Common myeloid progenitor, CD34-positive (primary cell): ENCODE measurements at regions of chr20 and their contacts with region 1.

Region 1: GRCh38 chr20:60210779-60211617 is 252.8 kb downstream of the CDH26 start:
- DNase-seq: peak; percentile 75 to 80 (median 77)
- H3K4me3 ChIP-seq: peak overlapping the region in 1 of 7 experiments; percentile 46
- H3K27ac ChIP-seq: no peak overlapping the region
- H3K4me1 ChIP-seq: peaks cover 9 to 50% (median 15%) of the 10 kb centered on the region in 4 experiments
- H3K27me3 ChIP-seq: no peaks in the 10 kb centered on the region

Region 2: DNA sequence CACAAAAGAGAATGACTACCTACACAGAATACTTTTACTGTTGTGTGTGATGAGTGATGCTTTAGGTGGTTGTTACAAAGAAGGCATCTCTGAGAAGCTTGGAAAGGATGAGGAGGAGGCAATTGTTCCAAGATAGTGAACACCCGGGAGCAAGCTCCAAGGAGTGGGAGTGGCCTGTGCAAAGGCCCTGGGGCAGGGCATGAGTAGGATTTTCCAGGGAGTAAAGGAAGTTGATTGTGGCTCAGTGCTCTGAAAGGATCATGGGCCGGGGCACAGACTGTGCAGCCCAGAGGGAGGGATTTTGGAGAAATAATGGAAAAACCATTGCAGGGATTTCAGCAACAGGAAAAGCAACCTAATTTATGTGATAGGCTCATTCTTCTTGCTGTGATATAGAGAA is 11.5 kb after region 1 on chr20:
- CTCF ChIA-PET with region 1: interaction called, 16 read pairs
- POLR2A ChIA-PET with region 1: no interaction called
- DNase-seq: no peak
- H3K4me3 ChIP-seq: no peak overlapping the region
- H3K27ac ChIP-seq: no peak overlapping the region
- H3K4me1 ChIP-seq: peaks cover 0 to 4% (median 0%) of the 10 kb centered on the region in 4 experiments
- H3K27me3 ChIP-seq: no peaks in the 10 kb centered on the region

Region 3: GRCh38 chr20:60262967-60263603 is 52.1 kb after region 1 on chr20:
- CTCF ChIA-PET with region 1: interaction called, 32 read pairs
- POLR2A ChIA-PET with region 1: no interaction called
- DNase-seq: peak; percentile 36 to 63 (median 57)
- H3K4me3 ChIP-seq: no peak overlapping the region
- H3K27ac ChIP-seq: no peak overlapping the region
- H3K4me1 ChIP-seq: peaks cover 0 to 12% (median 7%) of the 10 kb centered on the region in 4 experiments
- H3K27me3 ChIP-seq: no peaks in the 10 kb centered on the region